Dorsolateral prefrontal cortex (tissue), 120 donors: ENCODE measurements at regions of chr18 and their contacts with region 1.

Region 1: GRCh38 chr18:74476140-74476539 is 19.0 kb upstream of the DIPK1C start:
- DNase-seq: peak in 8 of 10 donors; percentile 51 to 74 (median 69)
- H3K4me3 ChIP-seq: peak overlapping the region in 3 of 59 donors; percentile 8 to 25 (median 14)
- H3K27ac ChIP-seq: peak overlapping the region in 1 of 59 donors; percentile 49
- H3K27me3 ChIP-seq: no peaks in the 10 kb centered on the region
- CTCF ChIP-seq: peak; percentile 69 to 98 (median 86)

Region 2: DNA sequence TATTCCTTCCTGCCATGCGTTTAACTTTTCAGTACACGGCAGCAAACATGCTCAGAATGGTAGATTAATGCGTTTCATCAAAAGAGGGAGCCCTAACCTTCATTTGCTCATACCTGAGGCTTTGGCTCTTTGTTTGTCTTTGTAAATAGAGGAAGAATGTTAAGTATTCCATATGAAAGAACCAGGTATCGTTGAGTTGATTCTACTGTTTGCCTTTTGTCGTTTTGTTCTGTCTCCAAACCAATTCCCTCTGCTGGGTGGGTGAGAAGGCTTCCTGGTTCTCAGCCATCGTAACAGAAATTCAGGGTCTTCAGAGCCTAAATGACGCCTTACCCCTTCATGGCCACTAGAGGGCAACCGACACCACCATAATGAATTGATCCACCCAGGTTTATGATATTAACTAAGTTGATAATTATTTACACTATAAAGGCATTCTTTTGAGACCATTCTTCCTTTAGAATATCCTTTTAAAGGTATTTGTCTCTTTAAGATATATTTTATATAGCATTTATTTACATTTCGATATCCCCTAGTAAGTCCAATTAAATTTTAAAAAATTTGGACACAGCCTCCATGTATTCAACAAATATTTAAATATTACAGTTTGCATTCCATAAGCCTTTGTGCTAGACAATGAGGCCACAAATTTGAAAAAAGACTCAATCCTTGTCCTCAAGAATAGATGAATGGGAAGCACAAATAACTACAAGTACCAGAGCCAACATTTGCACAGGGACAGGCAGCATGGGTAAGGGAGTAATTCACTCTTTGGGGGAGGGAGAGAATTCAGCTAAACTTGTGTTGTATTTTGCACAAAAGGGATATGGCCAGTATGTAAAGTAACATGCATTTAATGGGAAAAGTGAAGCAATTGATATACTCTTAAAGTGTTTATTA is 279.7 kb before region 1 on chr18:
- intact Hi-C with region 1: loop called in 1 of 2 experiments (anchors 5 kb)
- DNase-seq: peak in 3 of 10 donors; percentile 50 to 54 (median 50)
- H3K4me3 ChIP-seq: peak overlapping the region in 41 of 59 donors; percentile 1 to 58 (median 35)
- H3K27ac ChIP-seq: peak overlapping the region in 1 of 59 donors; percentile 29
- H3K27me3 ChIP-seq: no peaks in the 10 kb centered on the region
- CTCF ChIP-seq: peak; percentile 82 to 99 (median 93)

Region 3: DNA sequence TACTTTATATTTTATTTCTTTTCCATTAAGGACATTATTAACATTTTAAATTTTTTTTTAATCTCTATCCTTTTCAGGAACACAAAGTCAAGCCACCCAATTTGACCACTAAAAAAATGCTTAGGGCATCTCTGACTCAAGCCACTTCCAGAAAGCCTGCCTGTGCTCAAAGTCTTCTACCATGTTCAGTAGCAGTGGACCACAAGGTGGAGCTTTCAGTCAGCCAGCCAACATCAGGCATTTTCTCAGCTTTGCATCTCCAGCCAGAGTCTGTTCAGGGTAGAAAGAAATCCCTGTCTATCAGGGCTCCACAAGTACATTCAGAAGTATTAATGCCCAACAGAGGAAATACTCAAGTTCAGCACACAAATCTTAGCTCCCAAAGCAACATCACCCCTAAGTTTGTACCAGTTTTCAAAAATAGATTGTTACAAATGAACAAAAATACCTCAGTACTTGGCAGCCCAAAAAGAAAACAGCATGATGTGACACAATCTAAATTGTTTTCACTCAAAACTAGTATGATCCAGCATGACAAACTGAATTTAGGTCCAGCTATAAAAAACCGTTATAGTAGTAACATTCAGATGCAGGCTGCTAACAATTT is 122.9 kb before region 1 on chr18:
- intact Hi-C with region 1: loop called (anchors 1 to 5 kb)
- DNase-seq: peak; percentile 43 to 90 (median 79)
- H3K4me3 ChIP-seq: no peak overlapping the region
- H3K27ac ChIP-seq: peak overlapping the region in 1 of 59 donors; percentile 18
- H3K27me3 ChIP-seq: no peaks in the 10 kb centered on the region
- CTCF ChIP-seq: peak; percentile 62 to 98 (median 89)

Region 4: DNA sequence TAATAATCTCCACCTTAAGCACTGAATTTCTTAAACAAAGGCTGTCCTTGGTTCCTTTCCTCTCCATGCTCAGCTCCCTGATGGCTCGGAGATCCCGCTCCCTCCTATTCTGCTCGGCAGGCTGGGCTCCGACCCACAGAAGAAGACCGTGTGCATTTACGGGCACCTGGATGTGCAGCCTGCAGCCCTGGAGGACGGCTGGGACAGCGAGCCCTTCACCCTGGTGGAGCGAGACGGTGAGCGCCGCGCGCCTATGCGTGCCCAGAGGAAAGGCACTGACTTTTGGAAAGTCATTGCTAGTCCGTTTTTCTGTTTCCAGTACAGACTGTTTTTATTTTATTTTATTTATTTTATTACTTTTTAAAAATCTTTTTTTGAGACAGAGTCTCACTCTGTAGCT is 29.6 kb after region 1 on chr18:
- intact Hi-C with region 1: loop called in 1 of 2 experiments (anchors 1 kb)
- DNase-seq: no peak
- H3K4me3 ChIP-seq: no peak overlapping the region
- H3K27ac ChIP-seq: peak overlapping the region in 50 of 59 donors; percentile 18 to 100 (median 96)
- H3K27me3 ChIP-seq: no peaks in the 10 kb centered on the region
- CTCF ChIP-seq: no peak

Region 5: GRCh38 chr18:74567822-74568221 is 91.7 kb after region 1 on chr18:
- intact Hi-C with region 1: no loop called
- DNase-seq: no peak
- H3K4me3 ChIP-seq: no peak overlapping the region
- H3K27ac ChIP-seq: no peak overlapping the region
- H3K27me3 ChIP-seq: peaks cover 0 to 3% (median 0%) of the 10 kb centered on the region in 45 donors
- CTCF ChIP-seq: no peak